HepG2 (cell line): ENCODE measurements at regions of chr12 and their contacts with region 1.

Region 1: GRCh38 chr12:110600254-110600653 is 13.7 kb upstream of the TCTN1 start:
- DNase-seq: peak; percentile 70
- ATAC-seq: no peak; the same call in 2 of the 3 replicates
- H3K4me3 ChIP-seq: no peak overlapping the region
- H3K27ac ChIP-seq: no peak overlapping the region
- H3K4me1 ChIP-seq: peaks cover 15% of the 10 kb centered on the region
- H3K27me3 ChIP-seq: no peaks in the 10 kb centered on the region
- CTCF ChIP-seq: peak; percentile 74
- EP300 ChIP-seq: no peak
- POLR2A ChIP-seq: no peak
- RAD21 ChIP-seq: peak; percentile 86

Region 2: DNA sequence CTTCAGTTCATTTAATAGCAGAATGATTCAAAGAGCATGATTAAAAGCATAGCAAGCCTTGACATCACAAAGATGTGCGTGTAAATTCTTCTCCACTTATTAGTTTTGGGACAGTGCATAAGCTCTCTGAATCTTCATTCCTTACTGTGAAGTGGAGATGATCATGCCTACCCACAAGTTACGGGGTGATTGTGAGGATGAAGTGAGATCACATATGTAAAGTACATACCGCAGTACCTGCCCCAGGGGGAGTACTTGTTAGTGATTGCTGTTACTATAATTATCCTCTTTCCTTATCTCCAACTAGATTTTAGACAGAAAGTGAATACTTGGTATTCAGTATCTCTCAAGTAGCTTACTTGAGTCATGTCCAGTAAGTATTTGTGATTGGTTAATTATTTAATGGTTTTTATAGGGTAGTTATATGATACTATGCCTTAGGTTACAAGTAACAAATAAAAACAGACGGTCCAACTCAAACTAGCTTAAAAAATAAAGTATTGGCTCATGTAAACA is 92.1 kb before region 1 on chr12:
- CTCF ChIA-PET with region 1: interaction called, 35 read pairs
- POLR2A ChIA-PET with region 1: no interaction called
- in situ Hi-C with region 1: loop called (anchors 5 kb)
- intact Hi-C with region 1: loop called (anchors 1 kb)
- DNase-seq: no peak
- ATAC-seq: no peak
- H3K4me3 ChIP-seq: no peak overlapping the region
- H3K27ac ChIP-seq: no peak overlapping the region
- H3K4me1 ChIP-seq: no peaks in the 10 kb centered on the region
- H3K27me3 ChIP-seq: no peaks in the 10 kb centered on the region
- CTCF ChIP-seq: no peak
- EP300 ChIP-seq: no peak
- POLR2A ChIP-seq: no peak
- RAD21 ChIP-seq: no peak

Region 3: GRCh38 chr12:110513842-110514241 is 86.4 kb before region 1 on chr12:
- CTCF ChIA-PET with region 1: interaction called, 35 read pairs
- POLR2A ChIA-PET with region 1: no interaction called
- in situ Hi-C with region 1: loop called (anchors 5 kb)
- intact Hi-C with region 1: loop called (anchors 1 kb)
- DNase-seq: no peak
- ATAC-seq: no peak
- H3K4me3 ChIP-seq: no peak overlapping the region
- H3K27ac ChIP-seq: no peak overlapping the region
- H3K4me1 ChIP-seq: no peaks in the 10 kb centered on the region
- H3K27me3 ChIP-seq: no peaks in the 10 kb centered on the region
- CTCF ChIP-seq: no peak
- EP300 ChIP-seq: no peak
- POLR2A ChIP-seq: no peak
- RAD21 ChIP-seq: no peak

Region 4: GRCh38 chr12:110563702-110564640 is 36.3 kb before region 1 on chr12:
- CTCF ChIA-PET with region 1: no interaction called
- POLR2A ChIA-PET with region 1: no interaction called
- in situ Hi-C with region 1: no loop called
- intact Hi-C with region 1: no loop called
- DNase-seq: no peak
- ATAC-seq: no peak
- H3K4me3 ChIP-seq: no peak overlapping the region
- H3K27ac ChIP-seq: no peak overlapping the region
- H3K4me1 ChIP-seq: peaks cover 82% of the 10 kb centered on the region
- H3K27me3 ChIP-seq: no peaks in the 10 kb centered on the region
- CTCF ChIP-seq: no peak
- EP300 ChIP-seq: no peak
- POLR2A ChIP-seq: no peak
- RAD21 ChIP-seq: no peak